HepG2 (cell line): ENCODE measurements at regions of chr2 and their contacts with region 1.

Region 1: GRCh38 chr2:105896765-105897163 is 152.1 kb downstream of the NCK2 start:
- DNase-seq: peak; percentile 62
- ATAC-seq: peak; percentile 96
- H3K4me3 ChIP-seq: no peak overlapping the region
- H3K27ac ChIP-seq: no peak overlapping the region
- H3K4me1 ChIP-seq: peaks cover 8% of the 10 kb centered on the region
- H3K27me3 ChIP-seq: no peaks in the 10 kb centered on the region
- CTCF ChIP-seq: peak; percentile 83
- EP300 ChIP-seq: no peak
- POLR2A ChIP-seq: no peak
- RAD21 ChIP-seq: peak; percentile 78

Region 2: DNA sequence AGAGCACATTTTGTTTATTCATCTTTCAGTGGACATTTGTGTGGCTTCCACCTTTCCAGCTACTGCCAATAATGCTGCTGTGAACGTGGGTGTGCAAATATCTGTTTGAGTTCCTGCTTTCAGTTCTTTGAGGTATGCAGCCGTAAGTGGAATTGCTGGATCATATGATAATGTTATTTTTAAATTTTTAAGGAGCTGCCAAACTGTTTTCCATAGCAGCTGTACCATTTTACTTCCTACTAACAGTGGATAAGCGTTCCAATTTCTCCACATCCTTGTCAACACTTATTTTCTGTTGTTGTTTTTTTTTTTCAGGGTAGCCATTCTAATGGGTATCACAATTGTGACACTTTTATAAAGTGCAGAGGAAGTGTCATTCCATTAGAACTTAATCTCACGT is 10.4 kb after region 1 on chr2:
- CTCF ChIA-PET with region 1: no interaction called
- POLR2A ChIA-PET with region 1: no interaction called
- in situ Hi-C with region 1: no loop called
- intact Hi-C with region 1: no loop called
- DNase-seq: no peak
- ATAC-seq: no peak
- H3K4me3 ChIP-seq: no peak overlapping the region
- H3K27ac ChIP-seq: no peak overlapping the region
- H3K4me1 ChIP-seq: peaks cover 35% of the 10 kb centered on the region
- H3K27me3 ChIP-seq: no peaks in the 10 kb centered on the region; a peak in 1 of 5 replicates
- CTCF ChIP-seq: no peak
- EP300 ChIP-seq: no peak
- POLR2A ChIP-seq: no peak
- RAD21 ChIP-seq: no peak

Region 3: DNA sequence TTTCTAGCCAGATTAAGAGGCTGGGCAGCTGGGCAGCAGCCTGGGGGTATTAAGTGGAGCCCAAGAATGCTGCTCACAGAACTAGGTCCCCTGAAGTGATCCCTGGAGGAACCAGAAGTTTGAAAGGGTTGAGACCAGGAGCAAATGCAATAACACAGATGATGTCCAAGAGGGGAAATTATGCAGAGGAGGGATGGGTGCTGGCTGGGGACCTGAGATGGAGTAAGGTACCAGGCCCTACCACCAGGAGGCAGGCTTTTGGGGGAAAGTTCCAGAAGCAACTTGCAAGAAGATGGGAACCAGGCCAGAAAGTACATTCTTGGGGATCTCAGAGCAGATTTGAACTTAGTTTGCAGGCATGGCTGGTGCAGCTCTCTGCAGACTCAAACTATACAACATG is 23.1 kb after region 1 on chr2:
- CTCF ChIA-PET with region 1: no interaction called
- POLR2A ChIA-PET with region 1: no interaction called
- in situ Hi-C with region 1: no loop called
- intact Hi-C with region 1: loop called (anchors 1 kb)
- DNase-seq: peak; percentile 35
- ATAC-seq: peak; percentile 32
- H3K4me3 ChIP-seq: peak overlapping the region in 1 of 3 experiments; percentile 39; a peak in 1 of 6 replicates
- H3K27ac ChIP-seq: peak overlapping the region; percentile 78
- H3K4me1 ChIP-seq: peaks cover 52% of the 10 kb centered on the region
- H3K27me3 ChIP-seq: no peaks in the 10 kb centered on the region
- CTCF ChIP-seq: peak; percentile 70
- EP300 ChIP-seq: no peak
- POLR2A ChIP-seq: no peak
- RAD21 ChIP-seq: no peak

Region 4: GRCh38 chr2:105969555-105969954 is 72.8 kb after region 1 on chr2:
- CTCF ChIA-PET with region 1: interaction called, 4 read pairs
- POLR2A ChIA-PET with region 1: no interaction called
- in situ Hi-C with region 1: no loop called
- intact Hi-C with region 1: loop called (anchors 2 kb)
- DNase-seq: peak; percentile 14
- ATAC-seq: peak; percentile 80
- H3K4me3 ChIP-seq: no peak overlapping the region
- H3K27ac ChIP-seq: no peak overlapping the region
- H3K4me1 ChIP-seq: peaks cover 6% of the 10 kb centered on the region; the same call in 1 of the 2 replicates
- H3K27me3 ChIP-seq: peaks cover 4 to 33% of the 10 kb centered on the region in 2 experiments; a peak in 4 of 5 replicates
- CTCF ChIP-seq: peak; percentile 74
- EP300 ChIP-seq: no peak
- POLR2A ChIP-seq: no peak
- RAD21 ChIP-seq: 0 out of 2 replicates have a peak, but pooled peaks have one; percentile 16

Region 5: DNA sequence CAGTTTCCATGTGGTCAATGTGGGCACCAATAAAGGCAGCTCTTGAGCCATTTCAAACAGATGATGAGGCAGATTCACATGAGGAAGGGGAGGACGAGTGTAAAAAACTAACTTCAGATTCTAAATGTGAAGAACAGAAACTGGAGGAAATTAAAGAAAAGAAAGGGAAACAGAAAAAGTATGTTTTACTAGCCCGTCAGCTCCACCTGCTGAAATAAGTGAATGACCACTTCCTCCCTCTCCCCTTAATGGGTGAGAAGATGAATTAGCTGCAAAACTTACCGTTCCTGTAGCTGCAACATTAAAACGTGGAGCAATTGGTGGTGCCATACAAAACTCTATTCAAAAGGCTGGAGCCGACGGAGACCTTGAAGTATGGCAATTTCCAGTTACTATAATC is 93.9 kb after region 1 on chr2:
- CTCF ChIA-PET with region 1: interaction called, 3 read pairs
- POLR2A ChIA-PET with region 1: no interaction called
- in situ Hi-C with region 1: no loop called
- intact Hi-C with region 1: loop called (anchors 2 kb)
- DNase-seq: no peak
- ATAC-seq: no peak
- H3K4me3 ChIP-seq: no peak overlapping the region
- H3K27ac ChIP-seq: no peak overlapping the region
- H3K4me1 ChIP-seq: no peaks in the 10 kb centered on the region
- H3K27me3 ChIP-seq: 0 out of 5 replicates have a peak, but pooled peaks cover 1 to 3% of the 10 kb centered on the region in 2 experiments
- CTCF ChIP-seq: peak; percentile 39
- EP300 ChIP-seq: no peak
- POLR2A ChIP-seq: no peak
- RAD21 ChIP-seq: no peak

Region 6: DNA sequence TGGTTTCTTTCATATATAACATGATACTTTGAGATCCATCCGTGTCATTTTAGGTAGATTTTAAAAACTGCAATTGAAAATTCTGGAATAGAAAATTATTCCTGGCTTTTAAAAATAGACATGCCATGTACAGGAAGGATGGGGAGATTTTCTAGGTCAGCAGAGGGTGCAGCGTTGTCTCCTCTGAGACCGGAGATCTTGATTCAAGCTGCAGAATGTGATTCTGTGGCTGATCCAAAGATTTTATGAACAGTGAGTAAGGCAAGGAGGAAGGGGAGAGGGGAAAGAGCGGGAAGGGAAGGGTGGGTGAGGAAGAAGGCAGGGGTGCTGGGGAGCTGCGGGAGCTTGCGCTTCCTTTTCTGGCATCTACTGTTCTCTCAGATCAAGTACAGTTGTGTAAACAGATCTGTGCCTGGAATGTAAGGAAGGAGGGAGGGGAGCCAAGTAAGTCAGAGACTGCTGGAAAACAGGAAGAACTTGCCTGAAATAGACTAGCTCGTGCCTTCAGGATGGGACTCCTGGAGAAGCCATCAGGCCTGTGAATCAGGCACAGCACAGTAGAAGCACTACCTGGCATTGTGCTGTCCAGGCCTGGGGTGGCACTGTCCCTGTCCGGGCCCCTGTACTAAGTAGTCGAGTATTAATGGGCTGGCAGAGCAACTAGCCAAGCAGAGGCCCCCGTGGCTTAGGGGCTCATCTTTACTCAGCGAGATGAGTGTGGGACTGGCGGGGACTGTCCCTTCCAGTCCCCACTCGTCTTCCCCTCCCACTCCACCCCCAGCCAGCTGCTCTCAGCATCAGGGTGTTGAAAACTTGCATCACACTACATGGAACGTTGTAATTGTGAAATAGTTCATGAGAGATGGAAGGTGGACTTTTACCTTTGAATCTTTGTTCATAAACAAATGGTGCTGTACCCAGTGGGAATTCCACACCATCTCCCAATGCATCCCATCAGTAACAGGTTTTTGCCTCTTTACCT is 133.8 kb after region 1 on chr2:
- CTCF ChIA-PET with region 1: no interaction called
- POLR2A ChIA-PET with region 1: no interaction called
- in situ Hi-C with region 1: no loop called
- intact Hi-C with region 1: loop called (anchors 2 kb)
- DNase-seq: peak; percentile 90
- ATAC-seq: peak; percentile 91
- H3K4me3 ChIP-seq: peak overlapping the region in 2 of 3 experiments; percentile 6 to 47; a peak in 3 of 6 replicates
- H3K27ac ChIP-seq: no peak overlapping the region
- H3K4me1 ChIP-seq: peaks cover 36% of the 10 kb centered on the region
- H3K27me3 ChIP-seq: peaks cover 1 to 7% of the 10 kb centered on the region in 2 experiments; a peak in 2 of 5 replicates
- CTCF ChIP-seq: peak; percentile 13; the same call in 1 of the 2 replicates
- EP300 ChIP-seq: peak; percentile 94 to 99
- POLR2A ChIP-seq: no peak
- RAD21 ChIP-seq: peak; percentile 32; the same call in 1 of the 2 replicates

Region 7: GRCh38 chr2:106085181-106085940 is 188.6 kb after region 1 on chr2:
- CTCF ChIA-PET with region 1: interaction called, 14 read pairs
- POLR2A ChIA-PET with region 1: no interaction called
- in situ Hi-C with region 1: no loop called
- intact Hi-C with region 1: loop called (anchors 1 kb)
- DNase-seq: peak; percentile 38
- ATAC-seq: peak; percentile 96
- H3K4me3 ChIP-seq: no peak overlapping the region
- H3K27ac ChIP-seq: no peak overlapping the region
- H3K4me1 ChIP-seq: no peaks in the 10 kb centered on the region
- H3K27me3 ChIP-seq: peaks cover 0 to 4% of the 10 kb centered on the region in 2 experiments; a peak in 1 of 5 replicates
- CTCF ChIP-seq: peak; percentile 69
- EP300 ChIP-seq: no peak
- POLR2A ChIP-seq: no peak
- RAD21 ChIP-seq: peak; percentile 68; the same call in 1 of the 2 replicates

Region 8: GRCh38 chr2:106542811-106543259 is 646.1 kb after region 1 on chr2:
- CTCF ChIA-PET with region 1: no interaction called
- POLR2A ChIA-PET with region 1: no interaction called
- in situ Hi-C with region 1: no loop called
- intact Hi-C with region 1: loop called (anchors 2 kb)
- DNase-seq: peak; percentile 53
- ATAC-seq: peak; percentile 96
- H3K4me3 ChIP-seq: peak overlapping the region; percentile 32 to 57 (median 38); a peak in 4 of 6 replicates
- H3K27ac ChIP-seq: no peak overlapping the region
- H3K4me1 ChIP-seq: no peaks in the 10 kb centered on the region
- H3K27me3 ChIP-seq: peaks cover 2 to 50% of the 10 kb centered on the region in 2 experiments; a peak in 3 of 5 replicates
- CTCF ChIP-seq: peak; percentile 96
- EP300 ChIP-seq: no peak
- POLR2A ChIP-seq: no peak
- RAD21 ChIP-seq: peak; percentile 90